ENCODE measurements at regions of chr1 and their contacts with region 1.

Region 1: GRCh38 chr1:20574686-20575540 is 14.0 kb upstream of the CDA start:
- DNase-seq: peak; percentile 44
- H3K4me3 ChIP-seq: no peak overlapping the region
- H3K27ac ChIP-seq: no peak overlapping the region
- H3K27me3 ChIP-seq: peaks cover 10% of the 10 kb centered on the region
- CTCF ChIP-seq: peak; percentile 83

Region 2: GRCh38 chr1:20521960-20522861 is 52.7 kb before region 1 on chr1:
- CTCF ChIA-PET with region 1: interaction called, 13 read pairs
- POLR2A ChIA-PET with region 1: no interaction called
- DNase-seq: peak; percentile 39
- H3K4me3 ChIP-seq: no peak overlapping the region
- H3K27ac ChIP-seq: no peak overlapping the region
- H3K27me3 ChIP-seq: peaks cover 5% of the 10 kb centered on the region
- CTCF ChIP-seq: peak; percentile 98

Region 3: DNA sequence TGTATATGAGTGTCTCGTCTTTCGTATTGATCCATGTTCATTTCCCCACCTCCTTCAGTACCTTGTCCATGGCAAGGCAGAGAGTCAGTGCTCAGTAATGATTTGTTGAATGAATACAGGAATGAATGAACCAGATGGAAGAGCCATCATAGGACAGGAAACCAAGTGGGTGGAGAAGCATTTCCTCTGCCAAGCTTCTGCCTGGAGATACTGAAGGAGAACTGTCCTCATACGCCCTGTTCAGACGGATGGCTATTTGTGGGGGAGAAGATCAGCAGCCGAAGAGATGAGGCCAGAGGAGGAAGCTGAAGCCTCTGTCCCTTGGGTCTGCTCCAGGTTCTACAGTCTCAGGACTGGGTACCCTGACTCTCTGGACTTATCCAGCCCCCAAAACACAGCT is 16.7 kb before region 1 on chr1:
- CTCF ChIA-PET with region 1: interaction called, 10 read pairs
- POLR2A ChIA-PET with region 1: no interaction called
- DNase-seq: no peak
- H3K4me3 ChIP-seq: no peak overlapping the region
- H3K27ac ChIP-seq: no peak overlapping the region
- H3K27me3 ChIP-seq: peaks cover 52% of the 10 kb centered on the region
- CTCF ChIP-seq: no peak

Region 4: DNA sequence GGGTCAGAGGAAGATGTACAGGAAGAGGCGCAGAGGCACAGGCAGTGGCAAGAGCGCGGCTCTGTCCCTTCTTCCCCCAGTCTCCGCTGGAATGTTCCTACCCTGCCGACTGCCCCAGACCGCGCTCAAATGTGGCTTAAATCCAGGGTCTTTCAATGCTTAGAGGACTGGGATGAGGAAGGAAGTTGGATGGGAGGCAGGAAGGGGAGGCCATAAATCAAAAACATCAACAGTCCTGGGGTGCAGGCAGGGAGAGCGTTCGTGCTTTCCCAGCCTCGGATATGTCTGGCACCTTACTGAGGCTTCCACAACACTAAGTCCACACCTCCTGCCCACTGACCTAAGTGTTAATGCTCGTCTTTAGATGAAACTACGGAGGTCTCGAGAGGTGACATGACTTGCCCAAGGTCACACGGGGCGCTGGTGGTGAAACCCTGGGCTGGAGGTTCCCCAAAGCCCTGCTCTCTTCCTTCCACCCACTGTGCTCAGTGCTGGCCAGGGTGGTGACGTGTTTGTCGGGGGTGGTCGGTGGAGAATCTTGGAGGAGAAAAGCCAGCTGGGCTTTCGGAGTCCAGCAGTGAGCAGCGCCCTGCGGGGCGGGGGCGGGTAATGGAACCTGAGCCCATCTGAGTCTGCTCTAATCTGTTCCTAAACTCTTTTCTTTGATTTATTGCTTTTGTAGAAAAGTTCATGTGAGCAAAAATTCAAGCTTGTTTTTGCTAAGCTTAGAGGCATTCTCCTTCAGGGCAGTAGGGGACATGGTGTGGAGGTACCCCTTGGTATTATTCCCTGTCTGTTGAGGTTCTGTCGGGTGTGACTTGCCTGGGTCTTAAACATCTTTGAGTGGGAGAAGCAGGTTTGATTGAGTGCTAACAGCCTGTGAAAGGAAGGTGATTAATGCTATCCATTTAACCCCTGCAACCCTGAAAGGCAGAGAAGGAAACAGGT is 14.7 kb after region 1 on chr1:
- CTCF ChIA-PET with region 1: interaction called, 20 read pairs
- POLR2A ChIA-PET with region 1: interaction called, 3 read pairs
- DNase-seq: peak; percentile 78
- H3K4me3 ChIP-seq: peak overlapping the region; percentile 43
- H3K27ac ChIP-seq: peak overlapping the region; percentile 85
- H3K27me3 ChIP-seq: no peaks in the 10 kb centered on the region
- CTCF ChIP-seq: no peak

Region 5: DNA sequence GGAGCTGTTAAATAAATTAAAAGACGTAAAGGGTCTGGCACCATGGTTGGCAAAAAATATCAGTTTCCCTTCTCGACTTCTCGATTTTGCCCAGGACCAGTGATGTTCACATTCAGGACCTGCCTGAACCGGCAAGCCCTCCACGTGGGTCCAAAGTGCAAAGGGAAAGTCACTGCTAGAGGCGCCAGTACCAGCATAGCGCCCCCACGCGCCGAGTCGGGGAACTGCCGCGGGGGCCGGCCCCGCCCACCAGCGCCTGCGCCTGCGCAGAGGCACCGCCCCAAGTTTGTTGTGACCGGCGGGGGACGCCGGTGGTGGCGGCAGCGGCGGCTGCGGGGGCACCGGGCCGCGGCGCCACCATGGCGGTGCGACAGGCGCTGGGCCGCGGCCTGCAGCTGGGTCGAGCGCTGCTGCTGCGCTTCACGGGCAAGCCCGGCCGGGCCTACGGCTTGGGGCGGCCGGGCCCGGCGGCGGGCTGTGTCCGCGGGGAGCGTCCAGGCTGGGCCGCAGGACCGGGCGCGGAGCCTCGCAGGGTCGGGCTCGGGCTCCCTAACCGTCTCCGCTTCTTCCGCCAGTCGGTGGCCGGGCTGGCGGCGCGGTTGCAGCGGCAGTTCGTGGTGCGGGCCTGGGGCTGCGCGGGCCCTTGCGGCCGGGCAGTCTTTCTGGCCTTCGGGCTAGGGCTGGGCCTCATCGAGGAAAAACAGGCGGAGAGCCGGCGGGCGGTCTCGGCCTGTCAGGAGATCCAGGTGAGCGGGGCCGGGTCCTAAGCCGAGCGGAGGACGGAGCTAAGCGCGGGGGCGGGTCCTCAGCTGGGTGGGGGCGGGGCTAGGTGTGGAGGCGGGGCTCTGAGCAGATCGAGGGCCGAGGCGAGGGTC is 58.5 kb after region 1 on chr1 and contains the start of gene PINK1:
- CTCF ChIA-PET with region 1: interaction called, 105 read pairs
- POLR2A ChIA-PET with region 1: interaction called, 6 read pairs
- DNase-seq: no peak
- H3K4me3 ChIP-seq: peak within 1 kb of the TSS; percentile 79
- H3K27ac ChIP-seq: peak within 1 kb of the TSS; percentile 11
- H3K27me3 ChIP-seq: no peaks in the 10 kb centered on the region
- CTCF ChIP-seq: peak; percentile 91
- polyA plus RNA-seq, gene PINK1: 43.8 and 49.0 TPM in 2 replicates

Region 6: DNA sequence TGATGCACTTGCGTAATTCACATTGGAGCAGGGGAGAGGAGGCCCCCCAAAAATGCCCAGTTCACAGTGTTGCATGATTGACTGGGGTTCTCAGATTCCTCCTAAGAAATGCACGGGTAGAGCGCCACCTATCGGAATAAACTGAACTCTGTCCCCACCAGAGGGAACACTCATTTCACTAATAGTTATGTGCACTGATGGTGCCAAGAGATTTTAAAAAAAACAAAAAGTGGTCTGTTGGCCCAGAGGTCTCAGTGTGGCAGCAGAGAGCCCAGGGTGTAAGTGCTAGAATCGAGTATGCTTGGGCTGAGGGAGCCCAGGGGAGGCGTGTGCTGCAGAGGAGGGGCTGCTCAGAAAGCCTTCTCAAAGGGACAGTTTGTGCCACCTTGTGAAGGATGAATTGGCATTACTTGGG is 65.3 kb after region 1 on chr1:
- CTCF ChIA-PET with region 1: interaction called, 105 read pairs
- POLR2A ChIA-PET with region 1: no interaction called
- DNase-seq: no peak
- H3K4me3 ChIP-seq: no peak overlapping the region
- H3K27ac ChIP-seq: no peak overlapping the region
- H3K27me3 ChIP-seq: no peaks in the 10 kb centered on the region
- CTCF ChIP-seq: peak; percentile 84